ENCODE measurements at regions of chr11 and their contacts with region 1.

Region 1: DNA sequence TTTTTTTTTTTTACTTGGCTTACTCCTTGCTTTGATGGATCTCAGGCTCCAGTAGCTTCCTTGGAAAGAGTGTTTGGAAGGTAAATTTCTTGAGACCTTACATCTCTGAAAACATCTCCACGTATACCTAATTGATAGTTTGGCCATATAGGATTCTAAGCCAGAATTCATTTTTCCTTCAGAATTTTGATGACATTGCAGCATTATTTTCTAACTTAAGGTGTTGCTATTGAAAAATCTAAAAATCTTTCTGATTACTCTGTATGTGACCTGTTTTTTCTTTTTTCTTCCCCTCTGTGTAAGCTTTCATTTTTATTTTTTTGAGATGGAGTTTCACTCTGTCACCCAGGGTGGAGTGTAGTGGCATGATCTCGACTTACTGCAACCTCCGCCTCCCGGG is 23.1 kb upstream of the SPTBN2 start:
- DNase-seq: no peak
- H3K4me3 ChIP-seq: no peak overlapping the region
- H3K27ac ChIP-seq: no peak overlapping the region
- H3K4me1 ChIP-seq: peaks cover 24% of the 10 kb centered on the region
- H3K27me3 ChIP-seq: no peaks in the 10 kb centered on the region
- CTCF ChIP-seq: no peak

Region 2: DNA sequence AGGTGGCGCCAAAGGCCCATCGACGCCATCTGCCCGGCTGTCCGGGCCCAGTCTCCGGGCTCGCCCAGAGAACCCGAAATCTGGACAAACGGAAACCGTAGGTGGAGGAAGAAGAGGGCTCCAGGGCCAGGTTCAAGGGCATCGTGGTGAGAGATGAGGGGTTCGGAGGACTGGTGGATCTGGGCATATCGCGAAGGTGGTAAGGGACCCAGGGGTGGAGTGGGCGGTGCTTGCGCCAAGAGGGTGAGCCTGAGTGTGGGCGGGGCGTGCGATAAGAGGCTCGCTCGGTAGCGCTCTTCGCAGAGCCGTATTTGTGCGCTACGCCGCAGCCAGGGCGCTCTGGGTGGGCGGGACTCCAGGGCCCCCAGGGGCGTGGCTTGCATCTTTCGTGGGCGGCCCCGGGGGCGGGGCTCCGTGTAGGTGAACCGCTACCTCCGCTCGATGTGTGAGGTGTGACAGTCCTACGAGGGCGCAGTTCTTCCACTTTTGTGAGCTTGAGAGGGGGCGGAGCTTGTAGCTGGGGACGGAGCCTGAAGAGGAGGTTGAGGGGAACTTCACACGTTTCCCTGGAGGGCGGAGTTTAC is 440.1 kb before region 1 on chr11:
- CTCF ChIA-PET with region 1: no interaction called
- POLR2A ChIA-PET with region 1: no interaction called
- intact Hi-C with region 1: no loop called
- DNase-seq: peak; percentile 88 to 89
- H3K4me3 ChIP-seq: peak overlapping the region; percentile 66
- H3K27ac ChIP-seq: peak overlapping the region; percentile 45; the same call in 1 of the 2 replicates
- H3K4me1 ChIP-seq: peaks cover 6% of the 10 kb centered on the region
- H3K27me3 ChIP-seq: peaks cover 18% of the 10 kb centered on the region
- CTCF ChIP-seq: peak; percentile 95

Region 3: GRCh38 chr11:66717925-66718319 is 34.2 kb before region 1 on chr11:
- CTCF ChIA-PET with region 1: no interaction called
- POLR2A ChIA-PET with region 1: no interaction called
- intact Hi-C with region 1: no loop called
- DNase-seq: peak in 1 of 2 experiments; percentile 27
- H3K4me3 ChIP-seq: peak overlapping the region; percentile 50; the same call in 1 of the 2 replicates
- H3K27ac ChIP-seq: no peak overlapping the region
- H3K4me1 ChIP-seq: peaks cover 49% of the 10 kb centered on the region
- H3K27me3 ChIP-seq: no peaks in the 10 kb centered on the region
- CTCF ChIP-seq: no peak

Region 4: GRCh38 chr11:66815646-66816045 is 63.5 kb after region 1 on chr11:
- CTCF ChIA-PET with region 1: no interaction called
- POLR2A ChIA-PET with region 1: interaction called, 5 read pairs
- intact Hi-C with region 1: loop called (anchors 10 kb)
- DNase-seq: peak in 1 of 2 experiments; percentile 85
- H3K4me3 ChIP-seq: no peak overlapping the region
- H3K27ac ChIP-seq: peak overlapping the region; percentile 49
- H3K4me1 ChIP-seq: peaks cover 20% of the 10 kb centered on the region
- H3K27me3 ChIP-seq: no peaks in the 10 kb centered on the region
- CTCF ChIP-seq: no peak

Region 5: GRCh38 chr11:66868726-66869566 is 116.8 kb after region 1 on chr11:
- CTCF ChIA-PET with region 1: no interaction called
- POLR2A ChIA-PET with region 1: no interaction called
- intact Hi-C with region 1: no loop called
- DNase-seq: peak in 1 of 2 experiments; percentile 74
- H3K4me3 ChIP-seq: no peak overlapping the region
- H3K27ac ChIP-seq: no peak overlapping the region
- H3K4me1 ChIP-seq: peaks cover 5% of the 10 kb centered on the region; the same call in 1 of the 2 replicates
- H3K27me3 ChIP-seq: no peaks in the 10 kb centered on the region
- CTCF ChIP-seq: peak; percentile 72

Region 6: GRCh38 chr11:66996609-66997405 is 244.7 kb after region 1 on chr11:
- CTCF ChIA-PET with region 1: no interaction called
- POLR2A ChIA-PET with region 1: interaction called, 13 read pairs
- intact Hi-C with region 1: no loop called
- DNase-seq: peak; percentile 30 to 46
- H3K4me3 ChIP-seq: no peak overlapping the region
- H3K27ac ChIP-seq: no peak overlapping the region
- H3K4me1 ChIP-seq: peaks cover 9% of the 10 kb centered on the region
- H3K27me3 ChIP-seq: no peaks in the 10 kb centered on the region
- CTCF ChIP-seq: no peak

Measured in PC-9 (cell line).